Activated T-helper 2 cell treated with anti-CD3 and anti-CD28 coated beads, Interferon-gamma antibody, Interleukin-2, Interleukin-4, amounts not matched to agents 10 μg/mL and 5 μg/mL and 100 μg/mL, durations not matched to agents 14 hours and 24 hours and 36 hours (primary cell): ENCODE measurements at regions of chr2 and their contacts with region 1.

Region 1: GRCh38 chr2:8681786-8682692 is at the start of gene ID2:
- DNase-seq: peak; percentile 99
- H3K4me3 Mint-ChIP-seq: peak within 1 kb of the TSS; percentile 100
- H3K27ac Mint-ChIP-seq: peak within 1 kb of the TSS; percentile 98
- H3K4me1 Mint-ChIP-seq: peaks cover 28% of the 10 kb centered on the region
- H3K27me3 Mint-ChIP-seq: peaks cover 10% of the 10 kb centered on the region
- total RNA-seq, gene ID2: 423 and 431 TPM in 2 replicates

Region 2: GRCh38 chr2:6917071-6917760 is 1764.8 kb before region 1 on chr2 and contains the start of gene RNF144A:
- intact Hi-C with region 1: no loop called
- DNase-seq: peak; percentile 67
- H3K4me3 Mint-ChIP-seq: peak within 1 kb of the TSS; percentile 75
- H3K27ac Mint-ChIP-seq: peak within 1 kb of the TSS; percentile 47
- H3K4me1 Mint-ChIP-seq: peaks cover 54% of the 10 kb centered on the region
- H3K27me3 Mint-ChIP-seq: peaks cover 2% of the 10 kb centered on the region
- total RNA-seq, gene RNF144A: 19.9 and 20.0 TPM in 2 replicates

Region 3: GRCh38 chr2:7203055-7203467 is 1479.0 kb before region 1 on chr2:
- intact Hi-C with region 1: loop called (anchors 5 kb)
- DNase-seq: peak; percentile 48
- H3K4me3 Mint-ChIP-seq: no peak overlapping the region
- H3K27ac Mint-ChIP-seq: no peak overlapping the region
- H3K4me1 Mint-ChIP-seq: peaks cover 7% of the 10 kb centered on the region
- H3K27me3 Mint-ChIP-seq: peaks cover 2% of the 10 kb centered on the region

Region 4: GRCh38 chr2:7672027-7672684 is 1009.9 kb before region 1 on chr2:
- intact Hi-C with region 1: loop called (anchors 2 kb)
- DNase-seq: peak; percentile 51
- H3K4me3 Mint-ChIP-seq: peak overlapping the region; percentile 63
- H3K27ac Mint-ChIP-seq: peak overlapping the region; percentile 97
- H3K4me1 Mint-ChIP-seq: peaks cover 60% of the 10 kb centered on the region
- H3K27me3 Mint-ChIP-seq: no peaks in the 10 kb centered on the region

Region 5: GRCh38 chr2:7845332-7845731 is 836.7 kb before region 1 on chr2:
- intact Hi-C with region 1: loop called (anchors 1 kb)
- DNase-seq: no peak
- H3K4me3 Mint-ChIP-seq: no peak overlapping the region
- H3K27ac Mint-ChIP-seq: peak overlapping the region; percentile 81
- H3K4me1 Mint-ChIP-seq: peaks cover 64% of the 10 kb centered on the region
- H3K27me3 Mint-ChIP-seq: no peaks in the 10 kb centered on the region

Region 6: GRCh38 chr2:8234757-8235374 is 447.2 kb before region 1 on chr2:
- intact Hi-C with region 1: loop called (anchors 10 kb)
- DNase-seq: no peak
- H3K4me3 Mint-ChIP-seq: no peak overlapping the region
- H3K27ac Mint-ChIP-seq: no peak overlapping the region
- H3K4me1 Mint-ChIP-seq: peaks cover 34% of the 10 kb centered on the region
- H3K27me3 Mint-ChIP-seq: peaks cover 4% of the 10 kb centered on the region

Region 7: DNA sequence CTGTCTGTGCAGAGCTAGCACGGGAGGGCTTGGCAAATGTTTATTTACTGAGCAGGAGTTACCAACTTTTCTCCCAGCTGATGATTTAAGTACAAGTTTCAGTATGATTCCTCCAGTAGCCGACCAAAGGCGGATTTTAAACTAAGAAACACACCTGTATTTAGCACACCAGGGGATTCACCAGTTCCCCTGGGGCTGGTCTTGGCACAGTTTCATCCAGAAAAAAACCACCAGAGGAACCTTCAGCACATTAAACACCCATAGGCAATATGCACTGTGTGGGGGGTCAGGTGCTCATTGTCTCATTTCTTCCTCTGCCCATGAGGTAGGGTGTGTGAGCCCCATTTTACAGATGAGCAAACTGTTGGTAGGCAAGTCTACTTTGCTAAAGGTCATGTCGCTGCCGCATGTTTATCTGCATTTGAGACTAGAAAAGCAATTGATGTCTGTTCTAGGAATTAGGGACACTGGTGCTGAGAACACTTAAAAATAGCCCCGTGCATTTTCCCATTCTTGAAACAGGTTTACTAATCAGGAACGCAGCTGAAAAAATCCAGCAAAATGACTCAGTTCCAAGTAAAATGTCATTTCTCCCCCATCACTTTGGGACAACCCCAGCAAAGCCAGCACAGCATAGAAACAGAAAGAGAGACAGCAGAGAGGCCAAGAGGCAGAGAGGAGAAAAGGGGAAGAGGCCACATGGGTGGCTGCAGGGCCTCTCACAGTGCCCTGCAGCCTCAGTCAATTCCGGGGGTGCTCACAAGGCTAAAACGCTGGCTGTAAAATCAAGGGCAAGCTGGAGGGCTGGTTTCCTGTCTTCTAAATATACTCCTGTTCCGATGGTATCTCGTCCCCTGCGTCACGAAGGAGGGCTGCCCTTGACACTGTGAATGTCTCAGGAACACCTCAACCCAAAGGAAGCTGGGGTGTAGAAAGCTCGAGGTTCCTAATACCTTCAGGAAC is 167.0 kb before region 1 on chr2:
- intact Hi-C with region 1: loop called (anchors 1 kb)
- DNase-seq: peak; percentile 58
- H3K4me3 Mint-ChIP-seq: peak overlapping the region; percentile 45
- H3K27ac Mint-ChIP-seq: peak overlapping the region; percentile 97
- H3K4me1 Mint-ChIP-seq: peaks cover 60% of the 10 kb centered on the region
- H3K27me3 Mint-ChIP-seq: no peaks in the 10 kb centered on the region